ENCODE measurements at regions of chr4 and their contacts with region 1.

Region 1: GRCh38 chr4:188627892-188628291 is 488.7 kb downstream of the TRIML1 start:
- DNase-seq: no peak
- ATAC-seq: no peak
- H3K4me3 ChIP-seq: no peak overlapping the region
- H3K27ac ChIP-seq: no peak overlapping the region
- H3K4me1 ChIP-seq: no peaks in the 10 kb centered on the region
- H3K27me3 ChIP-seq: no peaks in the 10 kb centered on the region
- CTCF ChIP-seq: no peak
- POLR2A ChIP-seq: no peak

Region 2: DNA sequence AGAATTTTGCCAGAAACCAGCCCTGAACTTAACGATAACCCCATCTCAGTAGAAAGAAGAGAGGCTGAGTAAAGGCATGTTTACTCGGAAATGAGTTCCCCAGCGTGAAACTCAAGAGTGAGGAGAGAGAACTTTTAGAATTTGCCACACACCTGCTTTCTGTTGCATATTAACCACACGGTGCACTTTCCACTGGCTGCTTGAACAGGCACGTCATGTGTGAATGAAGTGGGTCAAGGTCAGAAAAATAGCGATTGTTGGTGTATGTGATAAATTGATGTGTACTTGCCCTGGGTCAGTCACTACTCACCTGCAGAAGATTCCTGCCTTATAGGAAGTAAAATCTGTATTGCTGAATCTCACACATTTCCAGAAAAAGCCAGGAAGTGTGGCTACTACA is 93.0 kb before region 1 on chr4:
- in situ Hi-C with region 1: loop called in 1 of 4 experiments (anchors 25 kb)
- intact Hi-C with region 1: no loop called
- DNase-seq: no peak
- ATAC-seq: no peak
- H3K4me3 ChIP-seq: no peak overlapping the region
- H3K27ac ChIP-seq: no peak overlapping the region
- H3K4me1 ChIP-seq: no peaks in the 10 kb centered on the region
- H3K27me3 ChIP-seq: no peaks in the 10 kb centered on the region
- CTCF ChIP-seq: no peak
- POLR2A ChIP-seq: no peak